Ascending aorta (tissue), 2 donors: ENCODE measurements at regions of chr11 and their contacts with region 1.

Region 1: DNA sequence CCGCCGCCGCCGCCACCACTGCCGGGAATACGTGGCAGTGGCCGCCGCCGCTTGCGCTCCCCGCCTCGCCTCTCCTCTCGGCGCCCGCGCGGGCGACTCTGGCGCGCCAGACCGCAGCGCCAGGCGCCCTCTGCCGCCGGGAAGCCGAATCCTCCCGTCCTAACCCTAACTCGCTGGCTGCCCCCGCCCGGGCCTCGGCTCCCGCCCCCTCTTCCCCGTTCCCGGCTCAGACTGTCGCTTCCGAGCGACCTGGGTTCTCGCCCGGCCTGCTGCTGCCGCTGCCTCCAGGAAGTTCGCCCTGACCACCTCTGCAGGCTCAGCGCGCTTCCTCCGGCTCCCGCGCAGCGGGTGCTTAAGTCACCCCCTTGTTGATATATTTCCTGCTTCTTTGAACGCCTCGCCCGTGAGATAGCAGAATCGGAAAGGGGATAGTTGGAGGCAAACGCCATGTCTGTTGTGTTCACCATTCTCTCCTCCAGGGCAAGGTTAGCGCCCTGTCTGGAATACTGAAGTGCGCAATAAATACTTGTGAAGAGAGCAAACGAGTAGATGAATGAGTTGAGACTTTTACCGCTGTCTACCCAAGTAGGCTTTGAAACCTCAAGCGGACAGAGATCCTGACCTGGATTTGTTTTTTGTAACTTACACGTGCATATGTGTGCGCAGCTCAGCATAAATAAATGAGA is at the start of gene SMCO4:
- DNase-seq: peak in 1 of 2 donors; percentile 88
- H3K4me3 ChIP-seq: peak within 1 kb of the TSS; percentile 94 to 96
- H3K27ac ChIP-seq: peak within 1 kb of the TSS; percentile 95 to 97
- H3K4me1 ChIP-seq: peaks cover 0 to 12% of the 10 kb centered on the region in 2 donors
- H3K27me3 ChIP-seq: no peaks in the 10 kb centered on the region
- CTCF ChIP-seq: peak; percentile 77 to 84 (median 82)
- total RNA-seq, gene SMCO4: 89.2 TPM

Region 2: GRCh38 chr11:93099806-93100205 is 443.6 kb before region 1 on chr11:
- intact Hi-C with region 1: no loop called
- DNase-seq: no peak
- H3K4me3 ChIP-seq: no peak overlapping the region
- H3K27ac ChIP-seq: no peak overlapping the region
- H3K4me1 ChIP-seq: no peaks in the 10 kb centered on the region
- H3K27me3 ChIP-seq: no peaks in the 10 kb centered on the region
- CTCF ChIP-seq: no peak

Region 3: DNA sequence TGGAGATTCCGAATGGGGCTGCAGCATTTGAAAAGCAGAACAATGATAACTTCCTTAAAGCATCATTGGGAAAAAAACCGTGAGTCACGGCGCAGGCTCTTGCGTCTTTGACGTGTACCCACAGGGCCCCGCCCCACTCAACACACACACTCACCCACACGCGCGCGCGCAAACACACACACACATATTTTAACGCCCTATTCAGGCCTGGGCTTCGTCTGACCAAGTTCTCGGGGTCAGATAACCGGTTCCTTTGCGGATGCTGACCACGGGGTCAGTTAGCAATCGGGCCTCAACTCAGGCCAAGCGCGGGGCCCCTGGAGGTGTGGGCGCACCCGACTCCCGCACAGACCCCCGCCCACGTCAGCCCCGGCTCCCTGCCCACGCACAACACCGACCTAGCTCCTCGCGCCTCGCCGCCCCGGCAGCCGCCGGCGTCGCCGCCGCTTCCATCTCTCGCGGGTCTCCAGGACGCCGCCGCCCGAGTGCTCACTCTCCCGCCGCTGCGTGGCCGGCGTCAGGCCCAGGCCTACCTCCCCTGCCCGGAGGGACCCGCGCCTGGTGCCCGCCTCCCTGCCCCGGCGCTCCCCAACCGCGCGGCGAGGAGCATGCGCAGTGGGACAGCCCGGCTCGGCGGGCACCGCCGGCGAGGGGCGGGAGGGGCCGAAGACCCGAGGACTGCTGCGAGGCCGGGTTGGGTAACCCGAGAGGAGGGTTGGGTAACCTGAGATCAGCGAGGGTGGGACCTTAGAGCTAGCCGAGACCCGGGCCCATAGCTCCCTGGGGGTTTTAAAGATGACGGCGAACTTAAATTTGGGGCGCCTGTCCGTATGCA is 345.8 kb before region 1 on chr11 and contains the start of gene SLC36A4:
- intact Hi-C with region 1: loop called (anchors 5 kb)
- DNase-seq: peak; percentile 88 to 96
- H3K4me3 ChIP-seq: peak within 1 kb of the TSS; percentile 67 to 81
- H3K27ac ChIP-seq: peak within 1 kb of the TSS; percentile 90 to 92
- H3K4me1 ChIP-seq: no peaks in the 10 kb centered on the region
- H3K27me3 ChIP-seq: no peaks in the 10 kb centered on the region
- CTCF ChIP-seq: no peak
- total RNA-seq, gene SLC36A4: 18.6 TPM

Region 4: DNA sequence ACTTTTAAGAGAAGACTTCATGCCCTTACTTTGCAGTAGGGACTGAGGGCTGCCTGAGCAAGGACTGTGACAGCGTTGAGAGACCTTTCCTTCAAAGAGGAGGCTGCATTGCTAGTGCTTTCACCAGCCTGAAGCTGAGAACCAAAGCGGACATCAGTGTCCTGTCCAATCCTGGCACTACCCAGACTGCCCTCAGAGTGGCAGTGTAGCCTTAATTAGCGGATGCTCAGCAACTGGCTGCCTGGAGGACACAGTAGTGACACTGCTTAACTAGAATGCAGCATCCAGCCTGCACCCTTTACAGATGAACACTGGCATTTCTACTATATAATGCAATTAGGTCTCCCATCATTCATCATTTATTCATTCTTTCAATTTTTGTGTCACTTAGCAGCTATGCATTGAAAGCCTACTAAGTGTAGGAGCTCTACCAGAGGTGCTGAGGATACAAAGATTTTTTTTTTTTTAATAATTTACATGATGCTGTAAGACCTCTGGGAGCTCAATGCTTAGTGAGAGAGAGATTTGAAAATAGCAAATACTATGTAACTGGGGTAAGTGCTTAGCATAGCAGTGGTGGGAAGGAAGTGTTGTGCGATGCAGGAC is 308.7 kb before region 1 on chr11:
- intact Hi-C with region 1: loop called (anchors 1 kb)
- DNase-seq: peak; percentile 8 to 80
- H3K4me3 ChIP-seq: no peak overlapping the region
- H3K27ac ChIP-seq: no peak overlapping the region
- H3K4me1 ChIP-seq: no peaks in the 10 kb centered on the region
- H3K27me3 ChIP-seq: no peaks in the 10 kb centered on the region
- CTCF ChIP-seq: peak; percentile 78 to 95 (median 81)

Region 5: DNA sequence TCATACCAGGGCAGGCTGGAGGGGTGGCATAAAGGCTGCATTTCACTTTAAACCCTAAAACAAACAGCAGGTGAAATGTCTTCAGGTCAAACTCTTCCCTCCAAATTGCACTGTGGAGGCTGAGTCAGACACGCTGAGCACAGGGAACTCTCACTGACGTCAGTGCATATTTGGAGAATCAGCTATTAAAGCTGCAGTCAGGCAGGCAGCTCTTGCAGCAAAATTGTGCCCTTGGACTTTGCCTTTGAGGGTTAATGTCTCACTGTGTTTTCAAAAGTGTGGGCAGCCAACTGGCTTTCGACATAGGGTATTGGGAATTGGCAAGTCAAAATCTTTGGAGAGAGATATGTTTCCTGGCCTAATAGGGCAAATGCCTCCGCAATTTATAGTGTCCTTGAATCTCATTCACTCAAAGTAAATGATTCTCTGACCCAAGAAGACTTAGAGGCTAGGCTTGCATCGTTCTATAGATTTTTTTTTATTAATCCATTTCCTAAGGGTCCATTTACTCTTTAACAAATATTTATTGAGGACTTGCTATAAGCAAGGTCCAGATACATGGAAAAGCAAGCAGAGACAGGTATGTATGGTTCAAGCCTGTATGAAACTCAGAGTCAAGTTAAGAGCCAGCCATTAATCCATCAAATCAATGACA is 27.5 kb after region 1 on chr11:
- intact Hi-C with region 1: loop called (anchors 2 kb)
- DNase-seq: peak in 1 of 2 donors; percentile 77
- H3K4me3 ChIP-seq: no peak overlapping the region
- H3K27ac ChIP-seq: no peak overlapping the region
- H3K4me1 ChIP-seq: peaks cover 0 to 7% of the 10 kb centered on the region in 2 donors
- H3K27me3 ChIP-seq: no peaks in the 10 kb centered on the region
- CTCF ChIP-seq: no peak

Region 6: GRCh38 chr11:93662177-93662575 is 118.7 kb after region 1 on chr11:
- intact Hi-C with region 1: loop called (anchors 2 kb)
- DNase-seq: no peak
- H3K4me3 ChIP-seq: peak overlapping the region; percentile 83 to 93
- H3K27ac ChIP-seq: peak overlapping the region; percentile 74 to 83
- H3K4me1 ChIP-seq: no peaks in the 10 kb centered on the region
- H3K27me3 ChIP-seq: no peaks in the 10 kb centered on the region
- CTCF ChIP-seq: no peak

Region 7: DNA sequence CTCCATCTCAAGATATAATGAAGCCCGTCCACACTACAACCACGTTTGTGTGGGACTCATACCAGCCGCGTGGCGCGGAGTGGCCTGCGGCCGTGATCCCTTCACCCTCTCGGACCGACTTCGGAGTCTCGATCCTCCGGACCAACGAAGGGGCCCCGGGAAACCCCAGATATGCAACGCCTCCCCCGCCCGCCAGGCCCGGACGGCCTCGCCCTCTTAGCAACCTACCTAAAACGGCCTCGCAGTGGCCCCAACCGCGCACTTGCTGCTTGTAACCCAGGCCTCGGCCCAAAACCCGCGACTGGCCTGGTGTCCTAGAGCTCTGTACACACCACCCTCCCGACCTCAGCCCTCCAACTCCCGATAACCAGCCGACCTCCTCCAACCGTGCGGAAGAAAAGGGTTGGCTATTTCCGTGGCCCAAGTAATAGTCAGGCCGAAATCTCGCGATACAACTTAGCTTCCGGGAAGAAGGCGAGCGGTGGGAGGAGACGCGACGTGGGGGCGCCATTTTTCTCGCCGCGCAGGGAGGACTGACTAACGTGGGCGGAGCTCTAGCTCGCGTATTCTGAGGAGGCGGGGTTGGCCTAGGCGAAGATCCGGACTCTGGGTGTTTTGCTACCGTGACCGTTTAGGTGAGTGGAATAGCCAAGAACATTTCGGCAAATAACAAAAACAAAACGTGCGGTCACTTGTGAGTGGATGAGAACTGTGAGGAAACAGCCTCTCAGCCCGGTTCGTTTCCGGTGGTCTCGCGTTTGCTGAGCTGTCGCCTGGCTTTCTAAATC is 197.9 kb after region 1 on chr11 and contains the starts of genes C11orf54 and TAF1D:
- intact Hi-C with region 1: loop called (anchors 10 kb)
- DNase-seq: peak; percentile 91 to 99
- H3K4me3 ChIP-seq: peak within 1 kb of the TSS; percentile 88 to 91
- H3K27ac ChIP-seq: peak within 1 kb of the TSS; percentile 93 to 94
- H3K4me1 ChIP-seq: peaks cover 19 to 45% of the 10 kb centered on the region in 2 donors
- H3K27me3 ChIP-seq: no peaks in the 10 kb centered on the region
- CTCF ChIP-seq: peak in 1 of 3 experiments; percentile 6
- total RNA-seq, gene C11orf54: 3.9 TPM
- total RNA-seq, gene TAF1D: 81.1 TPM

Region 8: DNA sequence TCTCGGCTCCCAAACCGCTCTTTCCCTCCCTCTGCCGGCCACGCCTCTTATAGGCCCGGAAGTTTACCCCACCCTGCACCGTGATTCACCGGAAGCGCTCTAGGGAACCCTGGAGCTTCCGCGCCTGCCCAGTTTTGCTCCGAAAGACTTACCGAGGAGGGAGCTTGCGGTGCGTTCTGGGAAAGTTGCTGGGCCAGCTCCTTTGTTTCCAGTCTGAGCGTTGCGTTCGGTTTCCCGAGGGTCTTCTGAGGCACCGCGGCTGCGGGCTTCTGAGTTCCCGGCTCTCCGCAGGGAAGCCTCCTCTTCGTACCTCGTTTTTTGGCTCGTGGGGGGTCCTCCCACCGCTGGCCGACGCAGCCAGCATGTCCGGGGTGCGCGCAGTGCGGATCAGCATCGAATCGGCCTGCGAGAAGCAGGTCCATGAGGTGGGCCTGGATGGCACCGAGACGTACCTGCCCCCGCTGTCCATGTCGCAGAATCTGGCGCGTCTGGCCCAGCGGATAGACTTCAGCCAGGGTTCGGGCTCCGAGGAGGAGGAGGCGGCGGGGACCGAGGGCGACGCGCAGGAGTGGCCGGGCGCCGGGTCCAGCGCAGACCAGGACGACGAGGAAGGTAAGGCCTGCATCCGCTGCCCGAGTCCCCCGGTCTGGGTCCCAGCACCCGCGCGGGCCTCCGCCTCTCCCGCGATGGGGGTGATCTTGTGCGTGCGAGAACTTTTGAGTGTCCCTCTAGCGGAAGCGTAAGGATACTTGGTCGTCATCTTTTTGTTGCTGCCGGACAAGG is 240.9 kb after region 1 on chr11 and contains the start of gene MED17:
- intact Hi-C with region 1: loop called (anchors 10 kb)
- DNase-seq: peak; percentile 60 to 95
- H3K4me3 ChIP-seq: peak within 1 kb of the TSS; percentile 96 to 97
- H3K27ac ChIP-seq: peak within 1 kb of the TSS; percentile 91 to 97
- H3K4me1 ChIP-seq: peaks cover 13 to 20% of the 10 kb centered on the region in 2 donors
- H3K27me3 ChIP-seq: no peaks in the 10 kb centered on the region
- CTCF ChIP-seq: peak; percentile 33 to 47 (median 38)
- total RNA-seq, gene MED17: 12.6 TPM